ENCODE measurements at regions of chr12 and their contacts with region 1.

Region 1: DNA sequence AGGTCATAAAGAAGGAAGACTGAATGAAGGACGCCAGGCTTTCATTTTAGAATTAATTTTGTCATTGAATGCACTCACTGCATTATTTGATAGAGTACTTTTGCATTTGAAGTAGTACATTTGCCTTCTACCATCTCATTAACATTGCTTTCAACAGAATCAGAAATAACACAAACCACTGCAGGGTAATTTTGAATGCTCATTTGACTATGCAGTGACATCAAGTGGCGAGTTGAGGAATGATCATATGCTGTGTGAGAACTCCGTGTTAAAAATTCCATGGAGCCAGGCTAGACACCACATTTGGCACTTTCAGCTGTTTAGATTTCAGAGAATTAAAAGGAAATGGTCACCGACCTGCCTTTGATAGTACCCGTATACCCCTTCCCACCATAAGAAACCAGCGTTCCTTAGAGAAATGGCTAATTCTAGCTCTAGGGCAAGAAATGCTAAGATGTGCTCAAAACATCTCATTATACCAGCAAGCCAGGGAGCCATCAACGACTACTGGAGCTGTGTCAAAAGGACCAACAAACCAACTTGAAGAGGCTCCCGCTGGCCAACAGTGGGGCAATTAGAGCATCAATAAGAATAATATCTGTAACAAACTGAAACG is 16.5 kb downstream of the HEBP1 start:
- DNase-seq: peak; percentile 16 to 29 (median 22)
- ATAC-seq: peak; percentile 81
- H3K4me3 ChIP-seq: no peak overlapping the region
- H3K27ac ChIP-seq: no peak overlapping the region
- H3K4me1 ChIP-seq: peaks cover 0 to 2% of the 10 kb centered on the region in 2 experiments; a peak in 1 of 5 replicates
- H3K27me3 ChIP-seq: no peaks in the 10 kb centered on the region
- CTCF ChIP-seq: peak; percentile 38 to 66 (median 52); a peak in 4 of 6 replicates
- EP300 ChIP-seq: no peak
- POLR2A ChIP-seq: no peak
- RAD21 ChIP-seq: peak; percentile 41 to 61

Region 2: DNA sequence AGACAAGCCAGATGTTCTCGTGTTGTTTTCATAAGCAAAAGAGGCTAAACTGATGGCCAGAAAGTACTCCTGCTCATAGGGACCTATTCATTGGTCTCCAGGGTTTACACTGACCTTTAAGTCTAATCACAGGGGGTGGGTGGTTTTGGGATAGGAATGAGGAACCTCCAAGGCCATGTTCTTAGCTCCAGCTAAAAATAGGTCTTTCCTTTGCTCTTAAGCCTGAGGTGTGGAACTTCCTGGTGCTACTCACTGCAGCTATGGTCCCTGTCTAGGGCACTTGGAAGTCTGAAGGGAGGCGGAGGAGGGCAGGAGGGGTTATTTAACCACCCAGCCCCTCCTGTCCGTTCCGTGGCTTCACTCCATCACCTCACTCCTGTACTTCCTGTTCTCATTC is 73.5 kb before region 1 on chr12:
- CTCF ChIA-PET with region 1: no interaction called
- POLR2A ChIA-PET with region 1: no interaction called
- in situ Hi-C with region 1: loop called (anchors 5 kb)
- intact Hi-C with region 1: no loop called
- DNase-seq: peak in 1 of 4 experiments; percentile 15
- ATAC-seq: peak; percentile 53
- H3K4me3 ChIP-seq: no peak overlapping the region
- H3K27ac ChIP-seq: no peak overlapping the region
- H3K4me1 ChIP-seq: peaks cover 6 to 14% of the 10 kb centered on the region in 2 experiments; a peak in 3 of 5 replicates
- H3K27me3 ChIP-seq: peaks cover 12 to 30% of the 10 kb centered on the region in 2 experiments; a peak in 4 of 5 replicates
- CTCF ChIP-seq: no peak
- EP300 ChIP-seq: no peak; the same call in 1 of the 2 replicates
- POLR2A ChIP-seq: no peak
- RAD21 ChIP-seq: no peak

Region 3: DNA sequence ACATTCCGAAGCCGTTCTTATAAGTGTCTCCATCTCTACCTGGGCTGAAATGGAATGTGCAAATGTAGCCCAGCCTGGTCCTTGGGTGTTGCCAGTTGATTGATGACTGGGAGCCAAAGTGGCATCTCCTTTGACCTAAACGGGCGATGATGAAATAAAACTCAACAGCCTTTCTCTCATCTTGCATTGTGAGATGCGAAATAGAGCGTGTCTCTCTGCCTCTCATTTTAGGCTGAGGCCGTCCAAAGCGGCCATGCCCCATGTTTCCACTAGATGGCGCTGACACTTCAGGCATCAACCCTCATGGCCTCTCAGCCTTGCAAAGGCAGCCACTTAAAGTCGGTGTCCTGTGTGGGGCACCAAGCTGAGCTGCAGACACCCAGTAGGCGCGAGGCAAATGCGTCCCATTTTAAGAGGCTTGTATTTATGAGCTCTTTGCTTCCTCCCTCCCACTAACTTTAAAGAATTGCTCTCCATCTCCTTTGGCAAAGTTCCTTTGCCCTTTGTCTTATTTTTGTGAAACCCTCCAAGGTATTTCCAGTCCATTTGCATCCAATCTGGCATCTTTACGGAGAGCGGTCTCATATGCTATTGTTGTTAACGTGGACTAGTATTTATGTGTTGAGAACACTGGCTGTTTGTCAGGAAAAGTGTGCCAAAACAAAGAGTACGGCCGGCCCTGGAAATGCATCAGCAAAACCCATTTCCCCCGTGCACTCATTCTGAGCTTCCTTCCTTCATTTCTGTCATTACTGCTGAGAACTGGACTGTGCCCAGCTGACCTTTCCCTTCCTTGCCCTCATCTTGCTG is 67.2 kb before region 1 on chr12:
- CTCF ChIA-PET with region 1: interaction called, 6 read pairs
- POLR2A ChIA-PET with region 1: no interaction called
- in situ Hi-C with region 1: loop called (anchors 5 kb)
- intact Hi-C with region 1: loop called (anchors 2 kb)
- DNase-seq: peak; percentile 66 to 84 (median 70)
- ATAC-seq: peak; percentile 99
- H3K4me3 ChIP-seq: no peak overlapping the region
- H3K27ac ChIP-seq: no peak overlapping the region
- H3K4me1 ChIP-seq: no peaks in the 10 kb centered on the region; a peak in 1 of 5 replicates
- H3K27me3 ChIP-seq: peaks cover 3 to 17% of the 10 kb centered on the region in 2 experiments; a peak in 3 of 5 replicates
- CTCF ChIP-seq: peak; percentile 87 to 94 (median 92)
- EP300 ChIP-seq: no peak
- POLR2A ChIP-seq: no peak
- RAD21 ChIP-seq: peak; percentile 87 to 93

Region 4: DNA sequence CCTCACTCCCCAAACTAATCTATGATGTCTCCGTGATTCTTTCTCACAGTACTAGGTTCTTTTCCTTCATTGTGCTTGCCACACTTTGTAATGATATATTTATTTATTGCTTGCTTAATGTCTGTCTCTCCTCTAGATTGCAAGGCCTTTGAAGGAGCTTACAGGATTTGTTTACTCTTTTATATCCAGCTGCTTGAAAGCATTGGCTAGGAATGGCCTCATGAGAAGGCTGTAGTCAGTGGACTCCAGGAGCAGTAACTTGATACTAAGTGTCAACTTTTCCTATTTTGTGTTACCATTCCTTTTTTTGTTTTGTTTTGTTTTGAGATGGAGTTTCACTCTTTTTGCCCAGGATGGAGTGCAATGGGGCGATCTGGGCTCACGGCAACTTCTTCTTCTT is 53.4 kb after region 1 on chr12:
- CTCF ChIA-PET with region 1: no interaction called
- POLR2A ChIA-PET with region 1: no interaction called
- in situ Hi-C with region 1: no loop called
- intact Hi-C with region 1: no loop called
- DNase-seq: no peak
- ATAC-seq: no peak
- H3K4me3 ChIP-seq: no peak overlapping the region
- H3K27ac ChIP-seq: no peak overlapping the region
- H3K4me1 ChIP-seq: no peaks in the 10 kb centered on the region
- H3K27me3 ChIP-seq: no peaks in the 10 kb centered on the region
- CTCF ChIP-seq: no peak
- EP300 ChIP-seq: no peak
- POLR2A ChIP-seq: no peak
- RAD21 ChIP-seq: no peak

Measured in K562 (cell line).